ENCODE measurements at regions of chr15 and their contacts with region 1.

Region 1: GRCh38 chr15:52362502-52362901 is 66.9 kb upstream of the MYO5C start:
- DNase-seq: no peak
- ATAC-seq: peak; percentile 63
- H3K4me3 ChIP-seq: no peak overlapping the region
- H3K27ac ChIP-seq: no peak overlapping the region
- H3K4me1 ChIP-seq: no peaks in the 10 kb centered on the region
- H3K27me3 ChIP-seq: no peaks in the 10 kb centered on the region

Region 2: DNA sequence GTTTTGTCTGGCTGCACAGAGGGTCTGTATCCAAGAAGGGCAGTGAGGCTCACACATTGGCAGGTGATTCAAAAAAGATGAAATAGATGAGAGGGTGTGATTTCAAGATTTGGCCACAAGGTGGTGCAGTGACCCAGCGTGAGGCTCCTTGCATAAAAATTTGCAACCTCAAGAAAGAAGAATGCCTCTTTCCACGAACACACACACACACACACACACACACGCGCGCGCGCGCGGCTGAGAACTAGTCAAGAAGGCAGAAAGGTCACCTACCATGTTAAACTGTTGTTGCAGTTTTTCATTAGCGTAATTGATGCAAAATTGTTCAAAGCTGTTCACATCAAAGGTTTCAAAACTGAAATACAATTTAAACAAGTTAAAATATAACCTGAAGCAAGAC is 106.1 kb before region 1 on chr15:
- intact Hi-C with region 1: loop called in 1 of 2 experiments (anchors 10 kb)
- DNase-seq: peak; percentile 70 to 84
- ATAC-seq: peak; percentile 81
- H3K4me3 ChIP-seq: no peak overlapping the region
- H3K27ac ChIP-seq: no peak overlapping the region
- H3K4me1 ChIP-seq: peaks cover 0 to 2% of the 10 kb centered on the region in 2 donors
- H3K27me3 ChIP-seq: no peaks in the 10 kb centered on the region

Region 3: GRCh38 chr15:52528991-52529926 is 166.8 kb after region 1 on chr15:
- intact Hi-C with region 1: no loop called
- DNase-seq: peak; percentile 87 to 89
- ATAC-seq: peak; percentile 82
- H3K4me3 ChIP-seq: peak overlapping the region; percentile 82 to 92
- H3K27ac ChIP-seq: peak overlapping the region in 1 of 2 donors; percentile 62
- H3K4me1 ChIP-seq: no peaks in the 10 kb centered on the region
- H3K27me3 ChIP-seq: no peaks in the 10 kb centered on the region

Measured in aorta (tissue), 5 donors.